Naive thymus-derived CD4-positive, alpha-beta T cell (primary cell): ENCODE measurements at regions of chr22 and their contacts with region 1.

Region 1: DNA sequence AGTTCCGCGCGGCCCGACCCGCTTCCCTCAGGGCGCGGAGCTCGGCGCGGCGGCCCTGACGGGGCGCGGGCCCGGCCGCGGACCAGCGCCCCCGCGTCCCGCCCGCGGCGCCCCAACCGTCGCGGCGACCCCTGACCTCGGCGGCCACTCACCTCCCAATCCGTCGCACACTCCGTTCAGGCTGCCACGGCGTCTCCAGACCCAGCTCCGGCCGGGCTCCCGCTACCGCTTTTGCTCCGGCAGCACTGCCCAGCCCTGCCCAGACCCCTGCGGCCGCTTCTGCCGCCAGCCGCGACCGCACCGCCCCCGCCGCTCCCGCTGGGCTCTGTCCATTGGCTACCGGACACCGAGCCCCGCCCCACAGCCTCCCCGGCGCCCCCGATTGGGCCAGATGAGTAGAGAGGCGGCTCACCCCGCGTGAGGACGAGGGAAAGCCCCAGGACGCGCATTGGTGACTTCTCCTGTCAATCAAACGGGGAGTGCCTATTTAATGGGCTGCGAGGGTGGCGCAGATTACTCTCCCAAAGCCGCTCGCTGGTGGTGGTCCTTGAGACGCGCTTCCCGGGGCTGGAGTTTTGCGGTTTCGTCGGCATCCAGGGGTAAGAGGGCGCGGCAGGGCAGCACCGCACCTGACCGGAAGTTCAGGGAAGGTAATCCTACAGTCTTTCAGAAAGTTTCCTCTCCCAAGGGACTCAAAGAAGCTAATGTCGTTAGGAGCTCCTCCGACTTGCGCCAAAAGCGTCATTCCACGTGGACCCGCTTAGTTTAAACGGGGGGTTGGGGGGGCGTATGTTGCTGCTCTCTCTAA is at the start of gene PACSIN2:
- DNase-seq: peak; percentile 95 to 99 (median 97)
- ATAC-seq: peak; percentile 99
- H3K4me3 ChIP-seq: peak within 1 kb of the TSS; percentile 91
- H3K4me3 Mint-ChIP-seq: peak within 1 kb of the TSS; percentile 93 to 99 (median 98)
- H3K27ac ChIP-seq: peak within 1 kb of the TSS; percentile 83
- H3K27ac Mint-ChIP-seq: peak within 1 kb of the TSS; percentile 87 to 98 (median 95)
- H3K4me1 ChIP-seq: peaks cover 9 to 17% of the 10 kb centered on the region in 2 donors
- H3K4me1 Mint-ChIP-seq: peaks cover 18 to 56% (median 42%) of the 10 kb centered on the region in 7 donors
- H3K27me3 ChIP-seq: no peaks in the 10 kb centered on the region
- H3K27me3 Mint-ChIP-seq: peaks cover 0 to 5% (median 0%) of the 10 kb centered on the region in 5 donors
- total RNA-seq, gene PACSIN2: 27.6 to 62.5 (median 38.1) TPM

Region 2: GRCh38 chr22:42856865-42857704 is 158.0 kb before region 1 on chr22 and contains the start of gene ARFGAP3:
- CTCF ChIA-PET with region 1: no interaction called
- POLR2A ChIA-PET with region 1: interaction called, 14 read pairs
- intact Hi-C with region 1: loop called (anchors 1 kb)
- DNase-seq: peak; percentile 87 to 99 (median 96)
- ATAC-seq: peak; percentile 97
- H3K4me3 ChIP-seq: peak within 1 kb of the TSS; percentile 77
- H3K4me3 Mint-ChIP-seq: peak within 1 kb of the TSS; percentile 84 to 92 (median 88)
- H3K27ac ChIP-seq: peak within 1 kb of the TSS; percentile 93
- H3K27ac Mint-ChIP-seq: peak within 1 kb of the TSS; percentile 80 to 94 (median 89)
- H3K4me1 ChIP-seq: peaks cover 4 to 6% of the 10 kb centered on the region in 2 donors
- H3K4me1 Mint-ChIP-seq: peaks cover 0 to 22% (median 10%) of the 10 kb centered on the region in 7 donors
- H3K27me3 ChIP-seq: no peaks in the 10 kb centered on the region
- H3K27me3 Mint-ChIP-seq: no peaks in the 10 kb centered on the region
- total RNA-seq, gene ARFGAP3: 22.9 to 38.4 (median 31.0) TPM

Region 3: GRCh38 chr22:42959576-42960509 is 55.2 kb before region 1 on chr22:
- CTCF ChIA-PET with region 1: no interaction called
- POLR2A ChIA-PET with region 1: no interaction called
- intact Hi-C with region 1: loop called in 1 of 2 experiments (anchors 5 kb)
- DNase-seq: peak in 1 of 9 donors; percentile 10
- ATAC-seq: peak; percentile 50
- H3K4me3 ChIP-seq: no peak overlapping the region
- H3K4me3 Mint-ChIP-seq: peak overlapping the region; percentile 45 to 75 (median 52)
- H3K27ac ChIP-seq: peak overlapping the region; percentile 43
- H3K27ac Mint-ChIP-seq: peak overlapping the region; percentile 26 to 89 (median 61)
- H3K4me1 ChIP-seq: peaks cover 0 to 23% of the 10 kb centered on the region in 2 donors
- H3K4me1 Mint-ChIP-seq: peaks cover 45 to 89% (median 80%) of the 10 kb centered on the region in 7 donors
- H3K27me3 ChIP-seq: no peaks in the 10 kb centered on the region
- H3K27me3 Mint-ChIP-seq: no peaks in the 10 kb centered on the region

Region 4: GRCh38 chr22:42978453-42979103 is 36.5 kb before region 1 on chr22:
- CTCF ChIA-PET with region 1: no interaction called
- POLR2A ChIA-PET with region 1: no interaction called
- intact Hi-C with region 1: no loop called
- DNase-seq: no peak
- ATAC-seq: no peak
- H3K4me3 ChIP-seq: no peak overlapping the region
- H3K4me3 Mint-ChIP-seq: peak overlapping the region in 4 of 10 donors; percentile 5 to 49 (median 12)
- H3K27ac ChIP-seq: no peak overlapping the region
- H3K27ac Mint-ChIP-seq: peak overlapping the region in 3 of 9 donors; percentile 5 to 75 (median 57)
- H3K4me1 ChIP-seq: peaks cover 0 to 8% of the 10 kb centered on the region in 2 donors
- H3K4me1 Mint-ChIP-seq: peaks cover 6 to 52% (median 41%) of the 10 kb centered on the region in 7 donors
- H3K27me3 ChIP-seq: no peaks in the 10 kb centered on the region
- H3K27me3 Mint-ChIP-seq: no peaks in the 10 kb centered on the region

Region 5: GRCh38 chr22:43001271-43002201 is 13.5 kb before region 1 on chr22:
- CTCF ChIA-PET with region 1: interaction called, 3 read pairs
- POLR2A ChIA-PET with region 1: interaction called, 17 read pairs
- intact Hi-C with region 1: loop called in 1 of 2 experiments (anchors 2 kb)
- DNase-seq: peak in 2 of 9 donors; percentile 15 to 18
- ATAC-seq: peak; percentile 52
- H3K4me3 ChIP-seq: no peak overlapping the region
- H3K4me3 Mint-ChIP-seq: peak overlapping the region in 7 of 10 donors; percentile 40 to 70 (median 52)
- H3K27ac ChIP-seq: peak overlapping the region; percentile 25
- H3K27ac Mint-ChIP-seq: peak overlapping the region in 8 of 9 donors; percentile 6 to 85 (median 77)
- H3K4me1 ChIP-seq: peaks cover 5 to 17% of the 10 kb centered on the region in 2 donors
- H3K4me1 Mint-ChIP-seq: peaks cover 56 to 93% (median 86%) of the 10 kb centered on the region in 7 donors
- H3K27me3 ChIP-seq: no peaks in the 10 kb centered on the region
- H3K27me3 Mint-ChIP-seq: no peaks in the 10 kb centered on the region

Region 6: GRCh38 chr22:43088979-43089717 is 74.1 kb after region 1 on chr22 and contains the start of gene TTLL1:
- CTCF ChIA-PET with region 1: no interaction called
- POLR2A ChIA-PET with region 1: interaction called, 4 read pairs
- intact Hi-C with region 1: loop called (anchors 1 kb)
- DNase-seq: peak; percentile 79 to 90 (median 87)
- ATAC-seq: peak; percentile 93
- H3K4me3 ChIP-seq: peak within 1 kb of the TSS; percentile 49
- H3K4me3 Mint-ChIP-seq: peak within 1 kb of the TSS; percentile 77 to 98 (median 92)
- H3K27ac ChIP-seq: peak within 1 kb of the TSS; percentile 60
- H3K27ac Mint-ChIP-seq: peak within 1 kb of the TSS; percentile 49 to 96 (median 82)
- H3K4me1 ChIP-seq: peaks cover 8 to 13% of the 10 kb centered on the region in 2 donors
- H3K4me1 Mint-ChIP-seq: peaks cover 0 to 19% (median 17%) of the 10 kb centered on the region in 7 donors
- H3K27me3 ChIP-seq: no peaks in the 10 kb centered on the region
- H3K27me3 Mint-ChIP-seq: no peaks in the 10 kb centered on the region
- total RNA-seq, gene TTLL1: 4.6 to 7.7 (median 6.9) TPM

Region 7: DNA sequence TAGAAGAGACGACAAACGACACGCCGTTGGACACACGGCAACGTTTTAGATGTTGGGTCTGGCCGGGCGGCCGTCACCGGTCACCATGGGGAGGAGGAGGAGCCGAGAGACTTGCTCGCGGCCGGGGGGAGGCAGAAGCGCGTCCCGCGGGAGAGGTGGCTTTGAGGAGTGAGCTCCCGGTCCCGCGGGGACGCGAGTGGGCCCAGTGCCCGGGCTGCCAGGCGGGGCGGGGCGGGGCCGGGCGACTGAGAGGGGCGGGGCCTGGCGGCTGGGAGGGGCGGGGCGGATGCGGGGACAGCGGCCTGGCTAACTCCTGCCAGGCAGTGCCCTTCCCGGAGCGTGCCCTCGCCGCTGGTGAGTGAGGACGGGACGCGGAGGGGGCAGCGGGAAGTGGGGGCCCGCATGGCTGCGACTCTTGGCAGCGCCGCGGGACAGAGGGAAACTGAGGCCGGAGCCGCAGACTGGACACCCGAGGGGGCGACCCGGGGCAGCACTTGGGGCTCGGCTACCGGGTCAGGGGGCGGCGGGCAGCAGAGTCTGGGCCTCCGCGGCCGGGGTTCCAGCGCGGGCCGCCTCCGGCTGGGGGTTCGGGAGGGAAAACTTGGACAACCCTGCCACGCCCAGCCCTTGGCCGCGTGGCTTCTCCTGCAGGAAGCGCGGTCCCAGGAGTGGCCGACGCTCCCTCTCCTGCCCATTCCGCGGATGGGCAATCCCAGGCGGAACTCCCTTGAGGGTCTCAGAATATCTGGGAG is 136.4 kb after region 1 on chr22 and contains the start of gene TSPO:
- CTCF ChIA-PET with region 1: no interaction called
- POLR2A ChIA-PET with region 1: no interaction called
- intact Hi-C with region 1: loop called in 1 of 2 experiments (anchors 2 kb)
- DNase-seq: peak; percentile 17 to 76 (median 39)
- ATAC-seq: peak; percentile 70
- H3K4me3 ChIP-seq: peak within 1 kb of the TSS; percentile 90
- H3K4me3 Mint-ChIP-seq: peak within 1 kb of the TSS; percentile 83 to 95 (median 92)
- H3K27ac ChIP-seq: peak within 1 kb of the TSS; percentile 78
- H3K27ac Mint-ChIP-seq: peak within 1 kb of the TSS; percentile 83 to 96 (median 93)
- H3K4me1 ChIP-seq: peaks cover 5 to 13% of the 10 kb centered on the region in 2 donors
- H3K4me1 Mint-ChIP-seq: peaks cover 16 to 47% (median 29%) of the 10 kb centered on the region in 7 donors
- H3K27me3 ChIP-seq: no peaks in the 10 kb centered on the region
- H3K27me3 Mint-ChIP-seq: no peaks in the 10 kb centered on the region
- total RNA-seq, gene TSPO: 56.1 to 190 (median 61.5) TPM